ENCODE measurements at regions of chr1 and their contacts with region 1.

Region 1: GRCh38 chr1:21344750-21345443 is 54.6 kb upstream of the ECE1 start:
- DNase-seq: no peak
- ATAC-seq: peak; percentile 7

Region 2: GRCh38 chr1:21261551-21262281 is 83.2 kb before region 1 on chr1:
- intact Hi-C with region 1: loop called (anchors 2 kb)
- DNase-seq: peak; percentile 86
- ATAC-seq: peak; percentile 75